Activated T-helper 2 cell treated with anti-CD3 and anti-CD28 coated beads, Interferon-gamma antibody, Interleukin-2, Interleukin-4, amounts not matched to agents 10 μg/mL and 5 μg/mL and 100 μg/mL, durations not matched to agents 14 hours and 24 hours and 36 hours (primary cell): ENCODE measurements at regions of chr16 and their contacts with region 1.

Region 1: GRCh38 chr16:56667581-56668571 is at the start of gene MT1G:
- DNase-seq: peak; percentile 40
- H3K4me3 Mint-ChIP-seq: no peak within 1 kb of the TSS
- H3K27ac Mint-ChIP-seq: no peak within 1 kb of the TSS
- H3K4me1 Mint-ChIP-seq: peaks cover 49% of the 10 kb centered on the region
- H3K27me3 Mint-ChIP-seq: peaks cover 46% of the 10 kb centered on the region
- total RNA-seq, gene MT1G: 21.1 and 24.5 TPM in 2 replicates

Region 2: GRCh38 chr16:56632156-56632847 is 35.6 kb before region 1 on chr16 and contains the start of gene MT1M:
- intact Hi-C with region 1: loop called (anchors 5 kb)
- DNase-seq: no peak
- H3K4me3 Mint-ChIP-seq: peak within 1 kb of the TSS; percentile 62
- H3K27ac Mint-ChIP-seq: no peak within 1 kb of the TSS
- H3K4me1 Mint-ChIP-seq: peaks cover 23% of the 10 kb centered on the region
- H3K27me3 Mint-ChIP-seq: peaks cover 64% of the 10 kb centered on the region
- total RNA-seq, gene MT1M: not detected in 2 replicates

Region 3: DNA sequence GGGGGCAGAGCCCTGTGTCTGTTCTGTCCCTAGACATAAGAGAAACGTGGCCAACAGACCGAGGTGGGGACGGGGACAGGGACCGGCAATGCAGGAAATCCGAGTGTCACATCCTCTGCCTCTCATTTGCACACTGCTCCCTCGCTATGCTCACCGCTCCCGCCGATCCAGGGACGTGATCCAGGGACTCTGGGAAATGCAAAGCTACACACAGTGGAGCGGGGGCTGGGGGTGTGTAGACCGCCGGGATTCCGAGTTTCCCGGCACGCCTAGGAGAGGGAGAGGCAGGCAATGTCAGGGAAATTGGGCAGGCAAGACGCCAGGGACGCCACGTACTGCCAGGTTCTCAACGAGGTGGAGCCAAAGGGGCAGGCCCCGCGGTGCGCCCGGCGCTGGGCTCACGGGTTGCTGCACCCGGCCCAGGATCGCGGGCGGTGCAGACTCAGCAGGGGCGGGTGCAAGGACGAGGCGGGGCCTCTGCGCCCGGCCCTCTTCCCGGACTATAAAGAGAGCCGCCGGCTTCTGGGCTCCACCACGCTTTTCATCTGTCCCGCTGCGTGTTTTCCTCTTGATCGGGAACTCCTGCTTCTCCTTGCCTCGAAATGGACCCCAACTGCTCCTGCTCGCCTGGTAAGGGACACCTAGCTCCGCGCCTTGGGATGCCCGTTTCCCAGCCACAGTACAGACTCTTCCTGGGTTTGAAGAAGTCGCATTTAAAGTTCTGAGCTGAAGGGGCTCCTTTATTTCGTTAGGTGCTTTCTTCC is 14.2 kb after region 1 on chr16 and contains the start of gene MT1X:
- intact Hi-C with region 1: loop called (anchors 2 kb)
- DNase-seq: peak; percentile 83
- H3K4me3 Mint-ChIP-seq: peak within 1 kb of the TSS; percentile 94
- H3K27ac Mint-ChIP-seq: peak within 1 kb of the TSS; percentile 84
- H3K4me1 Mint-ChIP-seq: peaks cover 24% of the 10 kb centered on the region
- H3K27me3 Mint-ChIP-seq: no peaks in the 10 kb centered on the region
- total RNA-seq, gene MT1X: 58.2 and 62.3 TPM in 2 replicates